ENCODE measurements at regions of chr3 and their contacts with region 1.

Region 1: GRCh38 chr3:4633078-4634004 is 140.2 kb downstream of the ITPR1 start:
- DNase-seq: peak; percentile 9
- H3K4me3 ChIP-seq: no peak overlapping the region
- H3K27me3 ChIP-seq: no peaks in the 10 kb centered on the region
- CTCF ChIP-seq: peak; percentile 85

Region 2: GRCh38 chr3:4340411-4341335 is 292.7 kb before region 1 on chr3:
- CTCF ChIA-PET with region 1: interaction called, 14 read pairs
- POLR2A ChIA-PET with region 1: no interaction called
- DNase-seq: no peak
- H3K4me3 ChIP-seq: no peak overlapping the region
- H3K27me3 ChIP-seq: no peaks in the 10 kb centered on the region
- CTCF ChIP-seq: no peak

Region 3: GRCh38 chr3:4350789-4351163 is 282.6 kb before region 1 on chr3:
- CTCF ChIA-PET with region 1: interaction called, 89 read pairs
- POLR2A ChIA-PET with region 1: no interaction called
- DNase-seq: no peak
- H3K4me3 ChIP-seq: no peak overlapping the region
- H3K27me3 ChIP-seq: no peaks in the 10 kb centered on the region
- CTCF ChIP-seq: peak; percentile 70

Region 4: DNA sequence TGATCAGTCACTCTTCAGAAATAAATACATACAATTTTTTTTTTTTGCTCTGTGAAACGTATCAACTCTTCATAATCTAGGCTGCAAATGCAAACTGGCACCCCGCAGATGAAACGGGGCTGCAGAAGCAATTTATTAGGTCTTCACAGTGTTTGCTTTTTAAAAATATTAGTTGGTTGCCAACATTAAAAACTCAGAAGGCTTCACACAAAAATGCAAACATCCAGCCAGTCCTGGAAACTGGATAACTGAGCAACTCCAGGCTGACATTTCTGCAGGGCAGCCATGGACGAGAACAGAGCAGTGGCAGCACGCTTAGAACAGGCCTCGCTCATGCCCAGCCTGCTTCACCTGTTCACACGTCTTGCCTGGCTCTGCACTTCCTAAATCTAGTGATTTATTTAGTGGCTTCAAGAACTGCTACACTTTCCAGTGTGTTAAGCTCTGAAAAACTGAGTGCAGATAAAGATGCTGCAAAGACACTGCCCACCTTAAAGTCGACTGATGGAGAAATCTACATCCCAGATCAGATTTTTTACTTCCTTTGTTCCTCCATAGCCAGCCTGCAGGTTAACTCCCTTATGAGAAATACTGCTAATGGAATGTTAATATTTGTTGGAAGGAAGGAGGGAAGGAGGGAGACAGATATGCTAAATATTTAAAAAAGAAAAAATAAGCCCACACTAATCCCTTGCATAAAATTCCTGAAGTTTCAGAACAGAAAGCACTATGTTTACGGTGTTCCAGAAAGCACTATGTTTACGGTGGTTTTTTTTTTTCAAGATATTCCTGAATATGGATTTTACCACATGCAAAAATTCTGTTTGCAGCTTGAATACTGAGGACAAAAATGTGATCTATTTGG is 276.6 kb before region 1 on chr3:
- CTCF ChIA-PET with region 1: interaction called, 89 read pairs
- POLR2A ChIA-PET with region 1: no interaction called
- DNase-seq: no peak
- H3K4me3 ChIP-seq: no peak overlapping the region
- H3K27me3 ChIP-seq: no peaks in the 10 kb centered on the region
- CTCF ChIP-seq: no peak